ENCODE measurements at regions of chr7 and their contacts with region 1.

Region 1: DNA sequence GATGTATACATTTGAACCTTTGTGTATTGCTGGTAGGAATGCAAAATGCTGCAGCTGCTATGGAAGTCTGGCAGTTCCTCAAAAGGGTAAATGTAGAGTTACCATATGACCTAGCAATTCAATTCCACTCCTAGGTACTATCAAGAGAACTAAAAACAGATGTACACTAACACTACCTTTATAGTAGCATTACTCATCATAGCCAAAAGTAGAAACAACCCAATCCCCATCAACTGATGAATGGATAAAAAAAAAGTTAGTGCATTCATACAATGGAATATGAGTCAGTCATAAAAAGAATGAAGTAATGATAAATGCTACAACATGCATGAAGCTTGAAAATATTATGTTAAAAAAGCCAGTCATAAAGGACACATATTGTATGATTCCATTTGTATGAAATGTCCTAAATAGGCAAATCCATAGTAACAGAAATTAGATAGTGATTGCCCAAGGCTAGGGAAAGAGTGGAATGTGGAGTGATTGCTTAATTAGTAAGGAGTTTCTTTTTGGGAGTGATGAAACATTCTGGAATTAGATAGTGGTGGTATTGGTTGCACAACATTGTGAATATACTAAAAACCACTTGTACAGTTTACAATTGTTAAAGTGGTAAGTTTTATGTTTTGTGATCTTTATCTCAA is 96.4 kb upstream of the AOAH start:
- DNase-seq: peak; percentile 92
- H3K4me3 ChIP-seq: no peak overlapping the region
- H3K27ac ChIP-seq: peak overlapping the region; percentile 82
- H3K4me1 ChIP-seq: peaks cover 7% of the 10 kb centered on the region
- H3K27me3 ChIP-seq: no peaks in the 10 kb centered on the region
- CTCF ChIP-seq: no peak

Region 2: DNA sequence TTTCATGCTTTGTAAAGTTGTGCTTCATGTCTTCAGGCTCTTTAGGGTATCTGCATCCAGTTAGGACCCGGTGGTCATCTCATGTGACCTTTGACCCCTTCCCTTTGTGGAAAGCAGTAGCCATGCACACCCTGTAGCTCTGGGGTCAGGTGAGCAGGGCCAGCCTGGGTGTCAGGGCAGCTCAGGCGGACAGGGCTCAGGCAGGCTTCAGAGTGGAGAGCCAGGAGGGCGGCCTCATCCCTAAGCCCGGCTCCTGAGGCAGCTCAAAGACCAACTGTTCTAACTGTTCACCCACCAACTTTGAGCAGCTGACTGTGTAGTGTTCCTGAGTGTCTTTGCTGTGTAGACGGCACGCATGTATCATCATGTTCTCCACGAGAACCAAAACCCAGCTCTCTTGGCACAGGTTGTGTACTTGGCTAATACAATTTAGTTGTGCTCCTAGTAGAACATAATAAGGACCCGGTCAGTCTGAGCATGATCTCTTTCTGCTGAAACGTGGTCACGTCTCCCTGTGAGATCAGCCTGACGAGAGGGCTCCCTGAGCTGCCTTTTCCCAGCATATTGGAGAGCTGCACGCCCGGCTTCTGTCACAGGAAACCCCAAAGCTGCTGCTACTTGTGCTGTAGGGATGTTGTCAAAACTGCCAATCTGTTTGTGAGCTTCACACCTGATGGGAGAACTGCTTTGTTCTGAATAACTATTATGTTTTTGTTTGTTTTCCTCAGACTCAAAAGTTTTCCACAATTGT is 637.6 kb before region 1 on chr7:
- CTCF ChIA-PET with region 1: no interaction called
- dilution Hi-C with region 1: no loop called
- in situ Hi-C with region 1: no loop called
- intact Hi-C with region 1: no loop called
- DNase-seq: no peak
- H3K4me3 ChIP-seq: no peak overlapping the region
- H3K27ac ChIP-seq: no peak overlapping the region
- H3K4me1 ChIP-seq: no peaks in the 10 kb centered on the region
- H3K27me3 ChIP-seq: no peaks in the 10 kb centered on the region
- CTCF ChIP-seq: no peak

Region 3: DNA sequence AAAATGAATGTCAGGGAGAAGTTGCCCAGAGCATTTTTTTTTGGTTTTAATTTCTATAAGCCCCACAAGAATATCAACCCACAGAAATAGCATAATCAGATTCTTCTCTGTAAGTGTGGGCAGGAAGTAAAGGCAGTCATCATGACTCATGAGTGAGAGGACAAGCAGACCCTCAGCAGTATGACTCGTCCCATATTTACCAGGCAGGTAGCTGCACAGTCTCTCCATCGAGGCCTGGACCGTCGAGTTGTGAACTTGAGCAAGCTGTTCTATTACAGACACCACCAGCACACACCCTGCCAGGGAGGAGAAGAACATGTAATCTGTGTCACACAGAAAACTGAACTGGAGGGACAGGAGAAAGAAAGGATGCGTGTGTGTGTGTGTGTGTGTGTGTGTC is 134.2 kb before region 1 on chr7:
- CTCF ChIA-PET with region 1: no interaction called
- dilution Hi-C with region 1: no loop called
- in situ Hi-C with region 1: no loop called
- intact Hi-C with region 1: loop called (anchors 5 kb)
- DNase-seq: peak; percentile 91
- H3K4me3 ChIP-seq: no peak overlapping the region
- H3K27ac ChIP-seq: peak overlapping the region; percentile 72
- H3K4me1 ChIP-seq: peaks cover 53% of the 10 kb centered on the region
- H3K27me3 ChIP-seq: no peaks in the 10 kb centered on the region
- CTCF ChIP-seq: no peak

Region 4: GRCh38 chr7:36746347-36746746 is 74.3 kb before region 1 on chr7:
- CTCF ChIA-PET with region 1: interaction called, 3 read pairs
- dilution Hi-C with region 1: no loop called
- in situ Hi-C with region 1: no loop called
- intact Hi-C with region 1: loop called (anchors 2 kb)
- DNase-seq: no peak
- H3K4me3 ChIP-seq: no peak overlapping the region
- H3K27ac ChIP-seq: no peak overlapping the region
- H3K4me1 ChIP-seq: peaks cover 25% of the 10 kb centered on the region
- H3K27me3 ChIP-seq: no peaks in the 10 kb centered on the region
- CTCF ChIP-seq: no peak

Region 5: DNA sequence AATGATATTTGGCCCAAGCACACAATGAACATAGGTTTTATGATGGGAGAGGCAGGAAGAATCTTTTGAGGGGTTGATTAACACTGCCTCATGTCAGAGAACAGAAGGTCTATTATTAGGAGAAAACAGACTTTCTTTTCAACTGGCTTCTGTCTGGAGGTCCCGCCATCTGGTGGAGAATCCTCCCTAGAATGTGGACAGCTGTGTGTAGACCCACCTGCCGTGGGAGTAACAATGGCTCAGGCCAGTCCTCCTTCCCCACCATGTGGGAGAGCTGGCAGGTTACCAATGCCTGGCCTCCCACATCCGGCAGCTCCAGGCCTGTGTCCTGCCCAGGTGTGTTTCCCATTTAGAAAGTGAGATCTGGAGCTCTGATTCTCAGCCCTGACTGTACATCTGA is 26.0 kb before region 1 on chr7:
- CTCF ChIA-PET with region 1: no interaction called
- dilution Hi-C with region 1: no loop called
- in situ Hi-C with region 1: no loop called
- intact Hi-C with region 1: loop called (anchors 1 kb)
- DNase-seq: peak; percentile 96
- H3K4me3 ChIP-seq: no peak overlapping the region
- H3K27ac ChIP-seq: peak overlapping the region; percentile 92
- H3K4me1 ChIP-seq: peaks cover 27% of the 10 kb centered on the region
- H3K27me3 ChIP-seq: no peaks in the 10 kb centered on the region
- CTCF ChIP-seq: peak; percentile 25 to 30

Region 6: DNA sequence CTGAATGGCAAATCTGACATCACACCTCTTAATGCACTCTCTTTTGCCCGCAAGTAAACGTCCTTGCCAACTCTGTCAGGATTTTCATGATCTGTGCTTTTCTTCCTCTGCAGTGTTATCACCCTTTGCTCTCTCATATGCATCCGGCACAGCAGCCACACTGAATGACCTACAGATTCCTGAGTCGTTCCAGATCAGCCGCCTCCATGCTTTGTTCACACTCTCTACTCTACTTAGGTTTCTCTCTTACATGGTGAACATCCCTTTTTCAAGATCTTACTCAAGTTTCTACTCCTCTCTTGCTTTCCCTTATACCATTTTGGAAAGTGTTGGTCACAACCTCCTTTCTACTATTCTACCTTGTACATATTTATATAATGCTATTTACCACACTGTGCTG is 31.4 kb after region 1 on chr7:
- CTCF ChIA-PET with region 1: no interaction called
- dilution Hi-C with region 1: no loop called
- in situ Hi-C with region 1: no loop called
- intact Hi-C with region 1: loop called (anchors 2 kb)
- DNase-seq: no peak
- H3K4me3 ChIP-seq: no peak overlapping the region
- H3K27ac ChIP-seq: no peak overlapping the region
- H3K4me1 ChIP-seq: peaks cover 16% of the 10 kb centered on the region
- H3K27me3 ChIP-seq: no peaks in the 10 kb centered on the region
- CTCF ChIP-seq: no peak